Ovary (tissue), 10 donors: ENCODE measurements at regions of chr12 and their contacts with region 1.

Region 1: DNA sequence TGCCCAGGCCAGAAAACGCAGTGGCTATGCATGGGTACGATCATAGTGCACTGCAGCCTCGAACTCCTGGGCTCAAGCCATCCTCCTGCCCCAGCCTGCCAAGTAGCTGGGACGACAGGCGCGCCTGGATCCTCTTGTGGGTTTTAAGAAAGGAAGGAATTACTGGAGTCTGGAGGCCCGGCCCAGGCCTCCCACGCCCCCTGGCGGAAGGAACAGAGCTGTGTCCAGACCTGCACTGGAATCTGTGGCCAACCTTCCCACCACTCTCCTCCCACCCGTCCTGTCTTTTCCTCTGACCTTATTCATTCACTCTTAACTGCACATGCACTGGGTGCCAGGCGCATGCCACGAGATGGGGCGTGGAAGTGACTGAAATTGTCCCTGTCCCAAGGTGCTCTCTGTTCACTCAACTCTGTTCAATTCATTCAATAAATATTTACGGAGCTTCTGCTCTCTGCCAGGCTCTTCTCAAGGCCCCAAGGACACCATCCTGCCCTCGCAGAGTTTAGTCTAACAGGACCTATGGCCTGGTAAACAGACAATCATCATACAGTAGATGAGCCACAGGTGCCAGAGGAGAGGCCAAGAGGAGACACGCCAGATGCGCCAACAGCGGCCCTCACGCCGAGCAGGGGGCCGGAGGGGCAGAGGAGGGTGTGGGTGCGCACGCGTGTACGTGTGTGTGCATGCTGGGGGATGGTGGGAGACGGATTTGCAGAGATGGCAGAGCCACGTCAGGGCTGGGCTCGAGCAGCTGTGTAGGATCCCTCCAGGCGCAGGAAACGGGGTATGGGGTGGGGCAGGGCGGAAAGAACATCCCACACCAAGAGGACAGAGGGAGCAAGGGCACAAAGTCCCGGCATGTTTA is 13.7 kb upstream of the TMEM106C start:
- DNase-seq: peak; percentile 71 to 83 (median 73)
- H3K4me3 ChIP-seq: no peak overlapping the region
- H3K27ac ChIP-seq: no peak overlapping the region
- H3K4me1 ChIP-seq: peaks cover 10% of the 10 kb centered on the region
- H3K27me3 ChIP-seq: no peaks in the 10 kb centered on the region
- CTCF ChIP-seq: peak; percentile 47 to 56 (median 51)
- EP300 ChIP-seq: no peak
- POLR2A ChIP-seq: no peak

Region 2: GRCh38 chr12:47844274-47845019 is 105.2 kb before region 1 on chr12:
- intact Hi-C with region 1: loop called in 1 of 4 experiments (anchors 10 kb)
- DNase-seq: peak in 2 of 5 donors; percentile 43 to 61
- H3K4me3 ChIP-seq: no peak overlapping the region
- H3K27ac ChIP-seq: no peak overlapping the region
- H3K4me1 ChIP-seq: peaks cover 12% of the 10 kb centered on the region
- H3K27me3 ChIP-seq: no peaks in the 10 kb centered on the region
- CTCF ChIP-seq: no peak
- EP300 ChIP-seq: no peak
- POLR2A ChIP-seq: no peak